ENCODE measurements at regions of chr20 and their contacts with region 1.

Region 1: GRCh38 chr20:34069341-34070078 is 42.5 kb downstream of the EIF2S2 start:
- DNase-seq: peak; percentile 85
- ATAC-seq: peak; percentile 73
- H3K4me3 ChIP-seq: no peak overlapping the region
- H3K27ac ChIP-seq: no peak overlapping the region
- H3K4me1 ChIP-seq: peaks cover 18% of the 10 kb centered on the region
- H3K27me3 ChIP-seq: no peaks in the 10 kb centered on the region
- CTCF ChIP-seq: peak; percentile 95
- POLR2A ChIP-seq: no peak
- RAD21 ChIP-seq: peak; percentile 97

Region 2: GRCh38 chr20:33791959-33792597 is 277.4 kb before region 1 on chr20:
- CTCF ChIA-PET with region 1: no interaction called
- POLR2A ChIA-PET with region 1: no interaction called
- dilution Hi-C with region 1: no loop called
- in situ Hi-C with region 1: no loop called
- intact Hi-C with region 1: loop called (anchors 2 kb)
- DNase-seq: peak; percentile 37
- ATAC-seq: peak; percentile 60
- H3K4me3 ChIP-seq: no peak overlapping the region
- H3K27ac ChIP-seq: no peak overlapping the region
- H3K4me1 ChIP-seq: peaks cover 10% of the 10 kb centered on the region
- H3K27me3 ChIP-seq: no peaks in the 10 kb centered on the region
- CTCF ChIP-seq: peak; percentile 66
- POLR2A ChIP-seq: no peak
- RAD21 ChIP-seq: peak; percentile 68

Region 3: DNA sequence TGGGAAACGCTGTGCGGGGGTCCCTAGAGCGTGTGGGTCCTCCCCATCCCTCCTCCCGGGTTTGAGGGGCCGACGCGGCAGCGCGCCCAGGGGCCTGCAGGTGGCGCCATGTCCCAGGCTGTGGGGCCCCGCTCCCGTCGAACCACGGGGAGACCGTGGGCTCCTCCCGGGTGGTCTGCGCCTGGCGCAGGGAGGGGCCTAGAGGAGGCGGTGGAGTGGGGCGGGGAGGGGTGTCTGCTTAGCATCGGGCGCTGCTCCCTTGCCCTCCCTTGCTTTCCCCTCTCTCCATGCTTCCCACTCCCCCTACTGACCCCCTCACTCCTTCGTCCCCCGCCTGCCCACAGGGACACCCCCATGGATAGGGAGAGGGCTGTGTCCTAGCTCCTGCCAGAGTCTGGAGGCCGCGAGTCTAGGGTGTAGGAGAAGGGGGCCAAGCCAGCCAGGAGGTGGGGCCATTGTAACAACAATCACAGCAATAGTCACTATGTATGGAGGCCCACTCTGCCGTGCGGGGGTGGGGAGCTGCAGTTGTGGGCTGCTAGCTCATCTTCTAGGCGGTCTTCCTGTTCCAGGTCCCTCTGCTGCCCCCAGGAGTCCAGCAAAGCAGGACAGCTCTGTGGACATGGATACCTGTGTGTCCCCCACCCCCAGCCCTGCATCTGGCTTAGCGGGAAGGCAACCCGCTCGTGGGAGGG is 206.7 kb before region 1 on chr20:
- CTCF ChIA-PET with region 1: interaction called, 6 read pairs
- POLR2A ChIA-PET with region 1: no interaction called
- dilution Hi-C with region 1: no loop called
- in situ Hi-C with region 1: loop called (anchors 5 kb)
- intact Hi-C with region 1: loop called (anchors 1 kb)
- DNase-seq: peak; percentile 78
- ATAC-seq: peak; percentile 94
- H3K4me3 ChIP-seq: no peak overlapping the region
- H3K27ac ChIP-seq: no peak overlapping the region
- H3K4me1 ChIP-seq: peaks cover 7% of the 10 kb centered on the region; the same call in 1 of the 2 replicates
- H3K27me3 ChIP-seq: no peaks in the 10 kb centered on the region
- CTCF ChIP-seq: peak; percentile 75
- POLR2A ChIP-seq: 0 out of 2 replicates have a peak, but pooled peaks have one; percentile 23
- RAD21 ChIP-seq: peak; percentile 89

Region 4: GRCh38 chr20:33933469-33933909 is 136.0 kb before region 1 on chr20:
- CTCF ChIA-PET with region 1: interaction called, 4 read pairs
- POLR2A ChIA-PET with region 1: no interaction called
- dilution Hi-C with region 1: no loop called
- in situ Hi-C with region 1: no loop called
- intact Hi-C with region 1: loop called (anchors 1 kb)
- DNase-seq: peak; percentile 55
- ATAC-seq: peak; percentile 84
- H3K4me3 ChIP-seq: no peak overlapping the region
- H3K27ac ChIP-seq: no peak overlapping the region
- H3K4me1 ChIP-seq: no peaks in the 10 kb centered on the region
- H3K27me3 ChIP-seq: peaks cover 10% of the 10 kb centered on the region
- CTCF ChIP-seq: peak; percentile 59
- POLR2A ChIP-seq: no peak
- RAD21 ChIP-seq: peak; percentile 71

Region 5: DNA sequence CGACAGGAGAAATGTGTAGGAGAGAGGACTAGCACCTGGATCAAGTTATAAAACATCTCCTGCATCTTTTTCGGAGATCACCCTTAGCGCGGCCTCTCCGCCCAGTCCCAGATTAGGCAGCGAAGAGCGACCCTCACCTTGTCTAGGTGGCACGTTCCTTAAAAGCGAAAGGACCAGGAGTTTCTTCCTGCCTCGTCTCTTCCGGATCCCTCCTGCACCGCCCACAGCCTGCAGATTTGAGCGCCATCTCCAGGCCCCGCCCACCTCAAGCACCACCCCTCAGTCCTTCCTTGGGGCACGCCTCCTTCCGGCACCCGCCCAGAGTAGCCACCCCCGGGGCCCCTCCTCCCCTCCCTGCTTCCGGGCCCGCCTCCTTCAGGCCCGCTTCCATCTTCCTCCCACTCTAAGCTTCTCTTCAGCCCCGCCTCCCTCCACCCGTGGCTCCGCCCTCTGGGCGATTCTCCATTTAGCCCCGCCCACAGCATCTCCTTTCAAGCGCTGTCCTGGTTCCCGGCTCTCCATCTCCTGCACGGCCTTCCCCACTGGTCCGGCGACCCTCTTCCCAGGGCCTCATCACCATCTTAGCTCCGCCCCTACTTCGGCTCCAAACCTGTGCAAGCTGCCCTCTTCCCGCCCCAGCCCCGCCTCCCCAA is 76.5 kb before region 1 on chr20:
- CTCF ChIA-PET with region 1: interaction called, 6 read pairs
- POLR2A ChIA-PET with region 1: no interaction called
- dilution Hi-C with region 1: no loop called
- in situ Hi-C with region 1: no loop called
- intact Hi-C with region 1: loop called (anchors 1 kb)
- DNase-seq: peak; percentile 99
- ATAC-seq: peak; percentile 84
- H3K4me3 ChIP-seq: peak overlapping the region; percentile 88
- H3K27ac ChIP-seq: peak overlapping the region; percentile 95
- H3K4me1 ChIP-seq: peaks cover 8% of the 10 kb centered on the region
- H3K27me3 ChIP-seq: no peaks in the 10 kb centered on the region
- CTCF ChIP-seq: no peak
- POLR2A ChIP-seq: peak; percentile 88
- RAD21 ChIP-seq: no peak

Region 6: DNA sequence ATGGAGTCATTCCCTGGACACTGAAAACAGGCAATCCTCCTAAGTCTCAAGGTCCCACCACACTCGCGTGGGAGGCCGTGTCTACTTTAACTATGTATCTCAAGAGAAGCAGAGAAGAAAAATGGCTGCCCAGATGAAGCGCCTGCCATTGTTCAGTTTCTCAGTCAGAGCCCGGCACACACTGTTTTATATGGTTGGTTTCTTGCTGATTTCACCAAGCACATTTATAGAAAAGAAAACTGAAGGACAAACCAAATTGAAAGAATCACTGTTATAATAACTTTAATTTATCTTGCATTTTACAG is 19.6 kb after region 1 on chr20:
- CTCF ChIA-PET with region 1: no interaction called
- POLR2A ChIA-PET with region 1: no interaction called
- dilution Hi-C with region 1: no loop called
- in situ Hi-C with region 1: no loop called
- intact Hi-C with region 1: no loop called
- DNase-seq: no peak
- ATAC-seq: no peak
- H3K4me3 ChIP-seq: no peak overlapping the region
- H3K27ac ChIP-seq: no peak overlapping the region
- H3K4me1 ChIP-seq: no peaks in the 10 kb centered on the region
- H3K27me3 ChIP-seq: no peaks in the 10 kb centered on the region
- CTCF ChIP-seq: no peak
- POLR2A ChIP-seq: no peak
- RAD21 ChIP-seq: no peak

Region 7: GRCh38 chr20:34129518-34130162 is 60.1 kb after region 1 on chr20:
- CTCF ChIA-PET with region 1: no interaction called
- POLR2A ChIA-PET with region 1: no interaction called
- dilution Hi-C with region 1: no loop called
- in situ Hi-C with region 1: no loop called
- intact Hi-C with region 1: loop called (anchors 1 kb)
- DNase-seq: peak; percentile 73
- ATAC-seq: peak; percentile 99
- H3K4me3 ChIP-seq: no peak overlapping the region
- H3K27ac ChIP-seq: no peak overlapping the region
- H3K4me1 ChIP-seq: no peaks in the 10 kb centered on the region
- H3K27me3 ChIP-seq: no peaks in the 10 kb centered on the region
- CTCF ChIP-seq: peak; percentile 87
- POLR2A ChIP-seq: no peak
- RAD21 ChIP-seq: peak; percentile 92

Region 8: GRCh38 chr20:34210271-34210670 is 140.8 kb after region 1 on chr20:
- CTCF ChIA-PET with region 1: no interaction called
- POLR2A ChIA-PET with region 1: no interaction called
- dilution Hi-C with region 1: no loop called
- in situ Hi-C with region 1: no loop called
- intact Hi-C with region 1: no loop called
- DNase-seq: no peak
- ATAC-seq: no peak
- H3K4me3 ChIP-seq: no peak overlapping the region
- H3K27ac ChIP-seq: no peak overlapping the region
- H3K4me1 ChIP-seq: no peaks in the 10 kb centered on the region
- H3K27me3 ChIP-seq: peaks cover 2% of the 10 kb centered on the region
- CTCF ChIP-seq: no peak
- POLR2A ChIP-seq: no peak
- RAD21 ChIP-seq: no peak

Measured in IMR-90 (cell line).